ENCODE measurements at regions of chr12 and their contacts with region 1.

Region 1: DNA sequence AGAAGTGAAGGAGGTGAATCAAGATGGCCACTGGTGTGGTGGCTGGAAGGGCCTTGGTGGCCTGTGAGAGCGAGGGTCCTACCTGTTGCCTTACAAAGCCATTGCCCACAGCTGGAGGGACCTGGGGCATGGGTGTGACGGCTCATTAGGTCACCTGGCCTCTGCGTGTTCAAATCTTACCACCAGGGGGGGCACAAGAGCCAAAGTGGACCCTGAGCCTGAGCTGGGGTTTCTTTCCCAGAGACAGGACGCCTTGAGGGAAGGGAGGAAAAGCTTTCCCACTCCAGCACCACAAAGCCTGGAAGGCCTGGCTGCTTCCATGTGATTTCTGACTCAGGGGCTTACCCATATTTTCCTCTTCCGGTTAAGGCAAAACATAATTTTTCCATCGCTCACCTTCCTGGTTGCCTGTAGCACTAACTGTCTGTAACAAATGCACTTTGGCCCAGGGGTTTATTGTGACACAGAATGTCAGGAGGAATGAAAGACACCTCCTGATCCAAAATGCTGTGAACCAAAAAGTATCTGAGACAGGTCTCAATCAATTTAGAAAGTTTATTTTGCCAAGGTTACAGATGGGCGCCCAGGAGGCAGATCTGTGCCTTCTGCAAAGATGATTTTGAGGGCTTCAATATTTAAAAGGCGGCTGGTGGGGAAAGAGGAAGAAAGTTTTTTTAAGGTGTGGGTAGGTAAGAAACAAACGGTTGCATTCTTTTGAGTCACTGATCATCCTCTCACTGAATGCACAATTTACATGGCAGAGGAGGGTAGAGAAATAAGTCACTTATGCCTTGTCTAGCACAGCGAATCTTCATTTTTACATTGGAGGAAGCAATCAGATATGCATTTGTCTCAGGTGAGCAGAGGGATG is 4.3 kb upstream of the CD9 start:
- DNase-seq: peak; percentile 53 to 87 (median 75)
- ATAC-seq: peak; percentile 80
- H3K4me3 ChIP-seq: no peak overlapping the region
- H3K4me3 Mint-ChIP-seq: no peak overlapping the region
- H3K27ac ChIP-seq: no peak overlapping the region
- H3K27ac Mint-ChIP-seq: no peak overlapping the region
- H3K4me1 ChIP-seq: peaks cover 8% of the 10 kb centered on the region
- H3K4me1 Mint-ChIP-seq: peaks cover 19% of the 10 kb centered on the region
- H3K27me3 ChIP-seq: peaks cover 0 to 6% of the 10 kb centered on the region in 2 experiments
- H3K27me3 Mint-ChIP-seq: no peaks in the 10 kb centered on the region
- CTCF ChIP-seq: peak; percentile 69

Region 2: GRCh38 chr12:5599378-5599777 is 596.5 kb before region 1 on chr12:
- CTCF ChIA-PET with region 1: no interaction called
- POLR2A ChIA-PET with region 1: no interaction called
- intact Hi-C with region 1: no loop called
- DNase-seq: no peak
- ATAC-seq: no peak
- H3K4me3 ChIP-seq: no peak overlapping the region
- H3K4me3 Mint-ChIP-seq: no peak overlapping the region
- H3K27ac ChIP-seq: no peak overlapping the region
- H3K27ac Mint-ChIP-seq: no peak overlapping the region
- H3K4me1 ChIP-seq: no peaks in the 10 kb centered on the region
- H3K4me1 Mint-ChIP-seq: no peaks in the 10 kb centered on the region
- H3K27me3 ChIP-seq: peaks cover 0 to 3% of the 10 kb centered on the region in 2 experiments
- H3K27me3 Mint-ChIP-seq: peaks cover 15% of the 10 kb centered on the region
- CTCF ChIP-seq: no peak

Region 3: DNA sequence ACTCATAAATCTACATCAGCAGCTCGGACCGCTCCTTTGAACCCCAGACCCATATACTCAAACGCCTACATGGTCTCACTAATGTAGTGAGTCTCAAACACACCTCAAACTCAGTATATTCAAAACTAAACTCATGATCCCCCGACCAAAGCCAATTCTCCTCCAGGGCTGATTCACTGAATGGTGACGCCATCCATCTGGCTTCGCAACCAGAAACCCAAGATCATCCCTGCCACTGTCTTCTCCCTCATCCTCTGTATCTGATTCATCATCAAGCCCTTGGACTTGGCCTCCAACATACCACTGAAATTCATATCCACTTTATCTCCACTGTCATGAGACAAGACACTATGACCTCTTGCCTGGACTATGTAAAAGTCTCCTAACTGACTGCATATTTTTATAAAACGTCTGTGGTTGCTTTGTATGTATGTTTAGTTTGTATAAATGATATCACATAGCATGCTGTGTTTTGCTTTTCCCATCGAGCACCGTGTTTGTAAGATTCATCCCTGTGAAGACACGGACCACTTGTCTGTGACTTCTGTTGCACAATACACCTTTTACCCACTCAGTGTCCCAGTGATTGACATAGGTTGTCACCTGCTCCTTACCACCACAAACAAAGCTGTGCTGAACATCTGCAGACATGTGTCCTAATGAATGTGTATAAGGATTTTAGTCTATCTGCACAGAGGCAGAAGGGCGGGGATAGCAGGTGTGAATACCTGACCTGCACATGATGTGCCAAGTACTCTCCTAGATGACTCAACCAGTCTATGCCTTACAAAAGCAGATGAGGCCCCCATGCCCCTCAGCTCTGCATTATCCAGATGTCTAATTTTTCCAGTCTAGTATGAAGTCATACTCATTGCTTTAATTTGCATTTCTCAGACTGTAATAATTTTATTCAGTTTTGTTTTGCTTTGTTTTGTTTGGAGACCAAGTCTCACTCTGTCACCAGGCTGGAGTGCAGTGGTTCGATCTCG is 148.4 kb before region 1 on chr12:
- CTCF ChIA-PET with region 1: no interaction called
- POLR2A ChIA-PET with region 1: no interaction called
- intact Hi-C with region 1: no loop called
- DNase-seq: no peak
- ATAC-seq: no peak
- H3K4me3 ChIP-seq: no peak overlapping the region
- H3K4me3 Mint-ChIP-seq: no peak overlapping the region
- H3K27ac ChIP-seq: no peak overlapping the region
- H3K27ac Mint-ChIP-seq: no peak overlapping the region
- H3K4me1 ChIP-seq: no peaks in the 10 kb centered on the region
- H3K4me1 Mint-ChIP-seq: no peaks in the 10 kb centered on the region
- H3K27me3 ChIP-seq: no peaks in the 10 kb centered on the region
- H3K27me3 Mint-ChIP-seq: peaks cover 9% of the 10 kb centered on the region
- CTCF ChIP-seq: no peak

Region 4: GRCh38 chr12:6074979-6075585 is 120.8 kb before region 1 on chr12:
- CTCF ChIA-PET with region 1: interaction called, 10 read pairs
- POLR2A ChIA-PET with region 1: interaction called, 8 read pairs
- intact Hi-C with region 1: loop called in 1 of 2 experiments (anchors 1 kb)
- DNase-seq: peak in 6 of 9 experiments; percentile 20 to 72 (median 42)
- ATAC-seq: peak; percentile 60
- H3K4me3 ChIP-seq: peak overlapping the region; percentile 35 to 43
- H3K4me3 Mint-ChIP-seq: peak overlapping the region; percentile 80
- H3K27ac ChIP-seq: no peak overlapping the region
- H3K27ac Mint-ChIP-seq: no peak overlapping the region
- H3K4me1 ChIP-seq: peaks cover 20% of the 10 kb centered on the region
- H3K4me1 Mint-ChIP-seq: peaks cover 26% of the 10 kb centered on the region
- H3K27me3 ChIP-seq: no peaks in the 10 kb centered on the region
- H3K27me3 Mint-ChIP-seq: peaks cover 5% of the 10 kb centered on the region
- CTCF ChIP-seq: no peak

Region 5: GRCh38 chr12:6167327-6168259 is 28.3 kb before region 1 on chr12:
- CTCF ChIA-PET with region 1: interaction called, 10 read pairs
- POLR2A ChIA-PET with region 1: no interaction called
- intact Hi-C with region 1: no loop called
- DNase-seq: peak in 8 of 9 experiments; percentile 12 to 58 (median 40)
- ATAC-seq: peak; percentile 60
- H3K4me3 ChIP-seq: no peak overlapping the region
- H3K4me3 Mint-ChIP-seq: peak overlapping the region; percentile 27
- H3K27ac ChIP-seq: peak overlapping the region in 1 of 2 experiments; percentile 31
- H3K27ac Mint-ChIP-seq: peak overlapping the region; percentile 16
- H3K4me1 ChIP-seq: peaks cover 28% of the 10 kb centered on the region
- H3K4me1 Mint-ChIP-seq: peaks cover 35% of the 10 kb centered on the region
- H3K27me3 ChIP-seq: no peaks in the 10 kb centered on the region
- H3K27me3 Mint-ChIP-seq: peaks cover 2% of the 10 kb centered on the region
- CTCF ChIP-seq: no peak

Region 6: GRCh38 chr12:6230321-6231110 is 34.6 kb after region 1 on chr12:
- CTCF ChIA-PET with region 1: interaction called, 9 read pairs
- POLR2A ChIA-PET with region 1: interaction called, 5 read pairs
- intact Hi-C with region 1: loop called in 1 of 2 experiments (anchors 5 kb)
- DNase-seq: peak; percentile 53 to 91 (median 79)
- ATAC-seq: peak; percentile 96
- H3K4me3 ChIP-seq: no peak overlapping the region
- H3K4me3 Mint-ChIP-seq: peak overlapping the region; percentile 38
- H3K27ac ChIP-seq: peak overlapping the region; percentile 3 to 55
- H3K27ac Mint-ChIP-seq: peak overlapping the region; percentile 90
- H3K4me1 ChIP-seq: peaks cover 33% of the 10 kb centered on the region
- H3K4me1 Mint-ChIP-seq: peaks cover 34% of the 10 kb centered on the region
- H3K27me3 ChIP-seq: no peaks in the 10 kb centered on the region
- H3K27me3 Mint-ChIP-seq: no peaks in the 10 kb centered on the region
- CTCF ChIP-seq: no peak

Region 7: GRCh38 chr12:6278439-6279255 is 82.7 kb after region 1 on chr12:
- CTCF ChIA-PET with region 1: interaction called, 185 read pairs
- POLR2A ChIA-PET with region 1: interaction called, 5 read pairs
- intact Hi-C with region 1: loop called (anchors 1 kb)
- DNase-seq: peak; percentile 72 to 93 (median 86)
- ATAC-seq: peak; percentile 100
- H3K4me3 ChIP-seq: peak overlapping the region; percentile 7 to 50
- H3K4me3 Mint-ChIP-seq: peak overlapping the region; percentile 72
- H3K27ac ChIP-seq: no peak overlapping the region
- H3K27ac Mint-ChIP-seq: no peak overlapping the region
- H3K4me1 ChIP-seq: peaks cover 6% of the 10 kb centered on the region
- H3K4me1 Mint-ChIP-seq: peaks cover 5% of the 10 kb centered on the region
- H3K27me3 ChIP-seq: peaks cover 0 to 6% of the 10 kb centered on the region in 2 experiments
- H3K27me3 Mint-ChIP-seq: peaks cover 27% of the 10 kb centered on the region
- CTCF ChIP-seq: peak; percentile 93

Measured in CD8-positive, alpha-beta T cell (primary cell).